Ascending aorta (tissue), 2 donors: ENCODE measurements at regions of chr6 and their contacts with region 1.

Region 1: GRCh38 chr6:143405373-143406154 is 44.9 kb downstream of the ADAT2 start:
- DNase-seq: no peak
- H3K4me3 ChIP-seq: peak overlapping the region in 1 of 2 donors; percentile 45
- H3K27ac ChIP-seq: peak overlapping the region; percentile 78 to 84
- H3K4me1 ChIP-seq: peaks cover 15 to 49% of the 10 kb centered on the region in 2 donors
- H3K27me3 ChIP-seq: no peaks in the 10 kb centered on the region
- CTCF ChIP-seq: no peak

Region 2: DNA sequence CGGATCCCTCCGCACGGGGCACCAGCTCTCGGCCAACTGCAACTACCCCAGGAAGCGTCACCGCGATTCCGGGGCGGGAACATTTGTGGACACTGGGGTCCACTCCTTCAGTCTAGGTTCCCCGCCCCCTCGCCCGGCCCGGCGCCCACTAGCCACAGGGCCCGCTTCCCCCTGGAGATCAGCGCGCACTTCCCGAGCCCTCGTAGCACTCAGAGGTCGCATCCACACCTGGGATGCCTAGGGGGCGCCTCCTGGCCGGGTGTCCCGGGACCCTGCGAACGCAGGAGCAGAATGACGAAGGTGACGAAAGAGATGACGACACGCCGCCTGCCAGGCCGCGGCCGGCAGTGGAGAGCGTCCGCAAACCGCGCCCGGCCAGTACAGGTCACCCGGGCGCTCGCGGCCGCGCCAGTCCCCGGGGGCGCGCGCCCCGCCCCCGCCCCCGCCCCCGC is 345.2 kb before region 1 on chr6:
- intact Hi-C with region 1: loop called (anchors 5 kb)
- DNase-seq: peak; percentile 75 to 96
- H3K4me3 ChIP-seq: peak overlapping the region; percentile 84 to 89
- H3K27ac ChIP-seq: peak overlapping the region; percentile 89 to 97
- H3K4me1 ChIP-seq: peaks cover 4 to 7% of the 10 kb centered on the region in 2 donors
- H3K27me3 ChIP-seq: no peaks in the 10 kb centered on the region
- CTCF ChIP-seq: peak in 1 of 3 experiments; percentile 6

Region 3: GRCh38 chr6:143136647-143137046 is 268.9 kb before region 1 on chr6:
- intact Hi-C with region 1: loop called (anchors 2 kb)
- DNase-seq: no peak
- H3K4me3 ChIP-seq: no peak overlapping the region
- H3K27ac ChIP-seq: peak overlapping the region; percentile 2 to 41
- H3K4me1 ChIP-seq: peaks cover 3 to 14% of the 10 kb centered on the region in 2 donors
- H3K27me3 ChIP-seq: no peaks in the 10 kb centered on the region
- CTCF ChIP-seq: no peak